Activated CD8-positive, alpha-beta T cell treated with anti-CD3 and anti-CD28 coated beads for 36 hours (primary cell): ENCODE measurements at regions of chr16 and their contacts with region 1.

Region 1: DNA sequence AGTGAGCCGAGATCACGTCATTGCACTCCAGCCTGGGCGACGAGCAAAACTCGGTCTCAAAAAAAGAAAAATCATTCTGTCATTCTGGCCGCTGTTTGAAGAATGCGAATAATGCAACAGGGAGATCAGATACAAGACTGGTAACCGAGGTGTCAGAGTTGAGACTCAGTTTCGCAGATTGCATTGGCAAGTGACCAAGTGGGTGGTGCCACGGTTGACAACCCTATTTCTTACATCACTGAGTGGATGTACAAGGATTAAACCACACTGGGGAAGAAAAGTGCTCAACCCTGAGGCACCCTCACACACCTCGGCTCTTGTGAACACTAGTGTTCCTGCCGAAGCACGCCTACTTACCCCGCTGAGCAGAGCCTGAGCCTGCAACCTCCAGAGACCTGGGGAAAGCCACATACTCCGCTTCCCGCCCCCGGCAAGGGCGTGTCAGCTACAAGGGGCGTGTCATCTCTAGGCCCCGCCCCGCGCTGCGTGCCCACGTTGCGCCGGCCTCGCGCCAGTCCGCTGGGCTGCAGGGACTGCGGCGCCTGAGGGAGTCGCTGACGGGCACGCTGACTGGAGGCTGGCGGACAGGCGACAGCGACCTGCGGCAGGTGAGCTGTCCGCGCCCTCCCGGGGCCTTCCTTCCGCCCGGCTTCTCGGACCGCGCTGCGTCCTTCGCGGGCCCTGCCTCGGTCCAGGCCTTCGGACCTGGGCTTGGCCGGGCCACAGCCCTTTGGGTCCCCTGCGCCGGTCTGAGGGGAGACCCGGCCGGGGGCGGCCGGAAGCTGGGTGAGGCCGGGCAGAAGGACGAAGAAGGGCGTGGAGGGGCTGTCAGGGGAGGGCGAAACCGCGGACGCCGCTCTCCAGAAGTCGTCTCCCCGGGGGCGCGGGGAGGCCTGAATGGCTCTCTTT is at the start of gene HMOX2:
- DNase-seq: peak; percentile 95
- ATAC-seq: peak; percentile 82
- H3K4me3 Mint-ChIP-seq: peak within 1 kb of the TSS; percentile 92
- H3K27ac Mint-ChIP-seq: peak within 1 kb of the TSS; percentile 83
- H3K4me1 Mint-ChIP-seq: peaks cover 33% of the 10 kb centered on the region
- H3K27me3 Mint-ChIP-seq: no peaks in the 10 kb centered on the region
- CTCF ChIP-seq: peak; percentile 35
- total RNA-seq, gene HMOX2: 64.7 to 65.4 TPM

Region 2: GRCh38 chr16:4425378-4426020 is 50.6 kb before region 1 on chr16 and contains the start of gene DNAJA3:
- CTCF ChIA-PET with region 1: no interaction called
- POLR2A ChIA-PET with region 1: interaction called, 4 read pairs
- intact Hi-C with region 1: loop called (anchors 5 kb)
- DNase-seq: peak; percentile 94
- ATAC-seq: peak; percentile 93
- H3K4me3 Mint-ChIP-seq: peak within 1 kb of the TSS; percentile 93
- H3K27ac Mint-ChIP-seq: peak within 1 kb of the TSS; percentile 100
- H3K4me1 Mint-ChIP-seq: peaks cover 30% of the 10 kb centered on the region
- H3K27me3 Mint-ChIP-seq: no peaks in the 10 kb centered on the region
- CTCF ChIP-seq: no peak
- total RNA-seq, gene DNAJA3: 86.8 to 101 TPM

Region 3: GRCh38 chr16:4487955-4488498 is 11.9 kb after region 1 on chr16:
- CTCF ChIA-PET with region 1: interaction called, 27 read pairs
- POLR2A ChIA-PET with region 1: interaction called, 17 read pairs
- intact Hi-C with region 1: no loop called
- DNase-seq: no peak
- ATAC-seq: peak; percentile 43
- H3K4me3 Mint-ChIP-seq: no peak overlapping the region
- H3K27ac Mint-ChIP-seq: peak overlapping the region; percentile 86
- H3K4me1 Mint-ChIP-seq: peaks cover 55% of the 10 kb centered on the region
- H3K27me3 Mint-ChIP-seq: no peaks in the 10 kb centered on the region
- CTCF ChIP-seq: no peak

Region 4: DNA sequence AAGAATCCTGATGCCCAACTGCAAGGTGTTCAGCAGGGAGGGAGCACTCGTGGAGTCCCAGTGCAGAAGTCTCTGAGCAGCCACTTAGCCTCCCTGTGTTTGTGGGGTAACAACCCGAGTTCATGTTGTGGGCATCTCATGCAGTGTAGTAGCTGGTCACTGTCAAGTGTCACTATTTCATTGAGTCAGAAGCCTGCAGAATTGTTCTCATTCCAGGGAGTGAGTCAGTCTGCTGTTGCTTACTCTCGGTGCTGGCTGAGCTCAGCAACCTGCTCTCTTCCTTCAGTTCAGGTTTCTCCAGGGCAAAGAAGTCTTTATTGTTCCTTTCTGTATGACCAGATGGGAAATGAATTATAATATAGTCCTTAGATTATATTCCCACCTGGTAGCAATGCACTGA is 24.1 kb after region 1 on chr16:
- CTCF ChIA-PET with region 1: interaction called, 28 read pairs
- POLR2A ChIA-PET with region 1: interaction called, 20 read pairs
- intact Hi-C with region 1: no loop called
- DNase-seq: peak; percentile 25
- ATAC-seq: peak; percentile 77
- H3K4me3 Mint-ChIP-seq: no peak overlapping the region
- H3K27ac Mint-ChIP-seq: no peak overlapping the region
- H3K4me1 Mint-ChIP-seq: peaks cover 81% of the 10 kb centered on the region
- H3K27me3 Mint-ChIP-seq: no peaks in the 10 kb centered on the region
- CTCF ChIP-seq: no peak

Region 5: DNA sequence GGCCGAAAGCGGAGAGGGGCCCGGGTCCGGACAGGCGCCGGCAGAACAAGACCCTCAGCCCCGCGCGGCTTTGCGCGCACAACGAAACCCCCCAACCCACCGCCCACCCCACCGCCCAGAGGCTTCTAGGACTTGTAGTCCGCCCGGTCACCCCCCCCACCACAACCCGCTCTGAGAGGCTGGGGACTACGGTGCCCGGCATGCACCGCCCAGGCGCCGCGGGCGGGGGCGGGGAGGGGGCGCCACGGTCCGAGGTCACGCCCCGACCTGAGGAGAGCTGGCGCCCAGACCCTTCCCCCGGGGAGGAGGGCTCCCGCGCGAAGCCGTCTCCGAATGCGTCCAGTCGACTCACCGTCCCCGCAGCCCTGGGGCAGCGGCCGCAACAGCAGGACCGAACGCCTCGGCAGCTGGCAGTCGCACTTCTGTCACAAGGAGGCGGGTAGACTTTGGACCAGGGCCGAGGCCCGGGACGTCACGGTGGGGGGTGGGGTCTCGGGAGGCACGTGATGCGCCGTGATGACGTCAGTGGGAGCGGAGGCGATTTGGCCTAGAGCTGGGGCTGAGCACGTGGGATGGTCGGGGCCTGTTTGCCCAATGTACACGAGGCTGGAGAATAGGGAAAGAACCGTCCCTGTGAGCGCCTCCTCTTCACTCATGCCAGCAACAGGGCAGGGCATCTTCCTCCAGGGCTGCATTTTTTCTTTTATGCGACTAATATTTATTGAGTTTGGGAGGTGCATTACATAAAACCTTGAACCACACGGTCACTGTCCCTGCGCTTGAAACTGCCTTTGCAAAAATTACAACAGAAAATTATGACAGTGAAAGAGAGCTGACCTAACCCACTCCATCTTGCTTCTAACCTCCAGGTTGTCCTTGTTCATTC is 62.5 kb after region 1 on chr16 and contains the start of gene CDIP1:
- CTCF ChIA-PET with region 1: interaction called, 4 read pairs
- POLR2A ChIA-PET with region 1: interaction called, 10 read pairs
- intact Hi-C with region 1: loop called (anchors 5 kb)
- DNase-seq: peak; percentile 99
- ATAC-seq: peak; percentile 83
- H3K4me3 Mint-ChIP-seq: peak within 1 kb of the TSS; percentile 62
- H3K27ac Mint-ChIP-seq: peak within 1 kb of the TSS; percentile 82
- H3K4me1 Mint-ChIP-seq: peaks cover 37% of the 10 kb centered on the region
- H3K27me3 Mint-ChIP-seq: no peaks in the 10 kb centered on the region
- CTCF ChIP-seq: no peak
- total RNA-seq, gene CDIP1: 31.9 to 32.2 TPM